ENCODE measurements at regions of chr7 and their contacts with region 1.

Region 1: GRCh38 chr7:23357190-23358093 is 58.3 kb downstream of the MALSU1 start:
- DNase-seq: no peak
- ATAC-seq: peak; percentile 26
- H3K4me3 Mint-ChIP-seq: no peak overlapping the region
- H3K27ac Mint-ChIP-seq: no peak overlapping the region
- H3K4me1 Mint-ChIP-seq: peaks cover 14% of the 10 kb centered on the region
- H3K27me3 Mint-ChIP-seq: peaks cover 12% of the 10 kb centered on the region

Region 2: GRCh38 chr7:22672846-22673652 is 684.4 kb before region 1 on chr7:
- CTCF ChIA-PET with region 1: no interaction called
- POLR2A ChIA-PET with region 1: no interaction called
- DNase-seq: peak; percentile 49
- ATAC-seq: peak; percentile 61
- H3K4me3 Mint-ChIP-seq: peak overlapping the region; percentile 48
- H3K27ac Mint-ChIP-seq: peak overlapping the region; percentile 83
- H3K4me1 Mint-ChIP-seq: peaks cover 67% of the 10 kb centered on the region
- H3K27me3 Mint-ChIP-seq: peaks cover 2% of the 10 kb centered on the region

Region 3: DNA sequence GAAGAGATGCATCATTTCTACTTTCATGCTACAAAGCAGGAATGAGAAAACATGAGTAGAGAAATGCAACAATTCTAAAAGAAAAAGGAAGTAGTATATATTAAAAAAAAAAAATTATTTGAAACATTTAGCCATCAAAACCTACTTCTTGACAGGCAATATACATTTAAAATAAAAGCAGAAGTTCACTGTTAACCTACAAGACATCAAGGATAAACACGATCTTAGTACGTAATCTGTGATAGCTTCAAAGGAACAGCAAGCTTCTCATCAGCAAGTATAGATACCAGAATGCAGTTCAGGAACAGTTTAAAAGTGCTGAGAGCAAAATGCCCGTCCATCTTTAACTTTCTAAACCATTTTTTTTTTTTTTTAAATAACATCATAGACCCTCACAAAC is 21.4 kb before region 1 on chr7:
- CTCF ChIA-PET with region 1: no interaction called
- POLR2A ChIA-PET with region 1: no interaction called
- DNase-seq: no peak
- ATAC-seq: no peak
- H3K4me3 Mint-ChIP-seq: no peak overlapping the region
- H3K27ac Mint-ChIP-seq: no peak overlapping the region
- H3K4me1 Mint-ChIP-seq: no peaks in the 10 kb centered on the region
- H3K27me3 Mint-ChIP-seq: peaks cover 15% of the 10 kb centered on the region

Region 4: GRCh38 chr7:23372641-23373040 is 15.2 kb after region 1 on chr7:
- CTCF ChIA-PET with region 1: interaction called, 12 read pairs
- POLR2A ChIA-PET with region 1: no interaction called
- DNase-seq: no peak
- ATAC-seq: no peak
- H3K4me3 Mint-ChIP-seq: no peak overlapping the region
- H3K27ac Mint-ChIP-seq: no peak overlapping the region
- H3K4me1 Mint-ChIP-seq: peaks cover 41% of the 10 kb centered on the region
- H3K27me3 Mint-ChIP-seq: peaks cover 4% of the 10 kb centered on the region

Region 5: GRCh38 chr7:23431702-23432199 is 74.3 kb after region 1 on chr7:
- CTCF ChIA-PET with region 1: interaction called, 18 read pairs
- POLR2A ChIA-PET with region 1: no interaction called
- DNase-seq: no peak
- ATAC-seq: no peak
- H3K4me3 Mint-ChIP-seq: no peak overlapping the region
- H3K27ac Mint-ChIP-seq: no peak overlapping the region
- H3K4me1 Mint-ChIP-seq: no peaks in the 10 kb centered on the region
- H3K27me3 Mint-ChIP-seq: peaks cover 17% of the 10 kb centered on the region

Region 6: DNA sequence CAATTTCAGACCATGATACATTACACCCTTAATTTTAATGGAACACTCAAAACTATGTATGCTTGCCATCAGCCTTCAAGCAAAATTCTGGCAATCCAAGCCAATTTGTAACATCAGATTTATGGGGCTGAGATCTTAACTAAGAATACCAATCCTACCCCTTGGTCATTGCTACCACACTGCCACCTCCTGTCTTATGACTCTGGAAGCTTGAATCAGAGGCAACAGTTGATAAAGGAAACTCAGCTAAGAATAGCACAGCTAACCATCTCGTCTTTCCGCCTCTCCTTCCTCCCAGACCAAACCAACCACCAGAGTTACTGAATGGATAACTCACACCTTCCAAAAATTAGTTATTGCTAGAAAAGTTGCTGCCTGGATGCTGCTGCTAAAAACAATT is 105.4 kb after region 1 on chr7:
- CTCF ChIA-PET with region 1: interaction called, 33 read pairs
- POLR2A ChIA-PET with region 1: no interaction called
- DNase-seq: peak; percentile 41
- ATAC-seq: peak; percentile 55
- H3K4me3 Mint-ChIP-seq: no peak overlapping the region
- H3K27ac Mint-ChIP-seq: no peak overlapping the region
- H3K4me1 Mint-ChIP-seq: peaks cover 14% of the 10 kb centered on the region
- H3K27me3 Mint-ChIP-seq: peaks cover 55% of the 10 kb centered on the region

Region 7: GRCh38 chr7:23523486-23524075 is 166.1 kb after region 1 on chr7:
- CTCF ChIA-PET with region 1: interaction called, 10 read pairs
- POLR2A ChIA-PET with region 1: no interaction called
- DNase-seq: no peak
- ATAC-seq: no peak
- H3K4me3 Mint-ChIP-seq: no peak overlapping the region
- H3K27ac Mint-ChIP-seq: no peak overlapping the region
- H3K4me1 Mint-ChIP-seq: peaks cover 51% of the 10 kb centered on the region
- H3K27me3 Mint-ChIP-seq: no peaks in the 10 kb centered on the region

Region 8: GRCh38 chr7:23539494-23539907 is 182.1 kb after region 1 on chr7:
- CTCF ChIA-PET with region 1: interaction called, 36 read pairs
- POLR2A ChIA-PET with region 1: no interaction called
- DNase-seq: no peak
- ATAC-seq: peak; percentile 79
- H3K4me3 Mint-ChIP-seq: peak overlapping the region; percentile 47
- H3K27ac Mint-ChIP-seq: peak overlapping the region; percentile 77
- H3K4me1 Mint-ChIP-seq: peaks cover 19% of the 10 kb centered on the region
- H3K27me3 Mint-ChIP-seq: no peaks in the 10 kb centered on the region

Measured in activated CD8-positive, alpha-beta T cell treated with anti-CD3 and anti-CD28 coated beads, Interleukin-2, amount 10 ng/mL, durations not matched to agents 7 days and 5 days (primary cell).